Heart right ventricle (tissue), 16 donors: ENCODE measurements at regions of chr5 and their contacts with region 1.

Region 1: DNA sequence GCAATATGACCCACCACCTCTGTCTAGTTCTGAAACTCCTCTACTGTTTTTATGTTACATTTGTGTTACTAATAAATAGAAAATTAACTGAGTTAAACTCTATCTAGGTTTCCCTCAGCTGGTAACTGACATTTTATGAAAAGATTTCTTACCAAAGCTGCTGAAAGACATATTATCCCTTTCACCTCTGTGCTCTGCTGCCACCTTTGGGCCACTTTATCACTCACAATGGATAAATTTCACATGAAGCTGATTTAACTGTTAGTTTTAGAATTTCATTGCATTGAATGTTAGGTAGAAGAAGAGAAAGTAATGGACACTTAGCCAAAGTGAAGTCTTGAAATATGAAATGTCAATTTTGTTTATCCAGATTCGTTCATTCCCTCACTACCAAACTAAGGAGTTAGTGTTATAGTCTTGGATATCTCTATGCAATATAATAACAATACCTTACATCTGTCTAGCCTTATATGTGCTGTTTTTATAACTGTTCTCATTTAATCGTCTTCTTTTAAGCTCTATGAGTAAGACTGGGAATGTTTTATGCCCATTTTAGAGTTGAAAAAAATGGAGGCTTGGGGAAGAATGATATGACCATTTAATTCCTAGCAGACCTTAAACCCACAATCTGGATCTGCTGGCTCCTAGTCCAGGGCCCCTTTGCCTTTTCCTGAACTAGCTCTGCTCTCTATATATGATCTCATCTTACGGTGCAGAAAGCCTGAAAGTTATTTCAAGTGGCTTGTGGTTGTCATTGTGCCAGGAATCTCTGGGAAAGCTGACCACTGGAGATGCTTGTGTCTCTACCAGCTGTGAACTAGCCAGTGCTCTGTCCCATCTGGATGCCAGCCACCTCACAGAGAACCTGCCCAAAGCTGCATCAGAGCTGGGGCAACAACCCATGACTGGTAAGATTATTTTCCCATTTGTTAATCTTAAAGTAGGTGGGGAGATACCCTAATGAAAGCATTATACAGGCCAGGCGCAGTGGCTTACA is 97.1 kb downstream of the GOLPH3 start:
- DNase-seq: peak; percentile 40 to 72
- ATAC-seq: peak; percentile 55 to 92 (median 83)
- H3K4me3 ChIP-seq: no peak overlapping the region
- H3K27ac ChIP-seq: peak overlapping the region in 7 of 10 donors; percentile 5 to 70 (median 49)
- H3K4me1 ChIP-seq: peaks cover 0 to 15% (median 3%) of the 10 kb centered on the region in 9 donors
- H3K27me3 ChIP-seq: no peaks in the 10 kb centered on the region
- CTCF ChIP-seq: peak; percentile 48 to 91 (median 79)

Region 2: DNA sequence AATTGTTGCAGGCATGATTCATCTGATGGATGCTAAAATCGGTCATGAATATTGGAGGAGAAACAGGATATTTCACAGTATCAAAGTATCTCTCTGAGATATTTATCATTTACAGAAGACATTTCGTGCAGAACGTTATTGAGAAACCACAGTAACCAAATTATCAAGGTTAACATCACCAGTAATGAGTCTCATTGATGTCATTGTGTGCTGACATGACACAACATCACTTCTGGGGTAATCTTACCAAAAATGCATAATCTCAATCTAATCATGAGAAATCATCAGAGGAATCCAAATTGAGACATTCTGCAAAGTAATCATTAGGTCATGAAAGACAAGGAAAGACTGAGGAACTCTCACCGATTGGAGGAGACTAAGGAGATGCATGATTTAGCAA is 502.2 kb before region 1 on chr5:
- intact Hi-C with region 1: loop called in 2 of 10 experiments (anchors 5 to 10 kb)
- DNase-seq: no peak
- ATAC-seq: no peak
- H3K4me3 ChIP-seq: no peak overlapping the region
- H3K27ac ChIP-seq: no peak overlapping the region
- H3K4me1 ChIP-seq: no peaks in the 10 kb centered on the region
- H3K27me3 ChIP-seq: no peaks in the 10 kb centered on the region
- CTCF ChIP-seq: no peak

Region 3: DNA sequence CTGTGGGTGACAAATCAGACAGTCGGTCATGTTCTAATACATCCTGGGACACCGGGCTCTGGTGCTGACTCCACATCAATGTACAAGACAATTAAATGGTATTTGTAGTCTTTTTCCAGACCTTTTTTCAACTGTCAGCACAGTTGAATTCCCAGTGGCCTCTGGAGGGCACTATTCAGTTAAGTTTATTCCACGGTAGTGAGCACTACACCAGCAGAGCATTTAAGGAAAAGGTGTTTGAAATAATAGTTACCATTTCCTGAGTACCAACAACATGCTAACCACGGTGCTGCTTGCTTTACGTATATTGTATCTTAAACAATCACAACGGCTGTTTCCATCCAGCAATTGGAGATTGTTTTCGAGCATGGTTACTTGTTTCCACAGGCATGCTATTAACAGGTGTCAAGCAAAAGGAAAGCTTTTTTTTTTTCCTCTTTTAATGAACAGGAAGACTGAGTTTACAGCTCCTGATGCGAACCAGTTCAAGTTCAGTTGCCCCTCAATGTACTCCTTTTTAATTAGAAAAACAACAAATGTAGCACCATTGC is 251.4 kb before region 1 on chr5:
- intact Hi-C with region 1: loop called (anchors 1 to 10 kb)
- DNase-seq: peak in 1 of 2 donors; percentile 61
- ATAC-seq: peak; percentile 69 to 92 (median 82)
- H3K4me3 ChIP-seq: no peak overlapping the region
- H3K27ac ChIP-seq: no peak overlapping the region
- H3K4me1 ChIP-seq: peaks cover 0 to 20% (median 13%) of the 10 kb centered on the region in 9 donors
- H3K27me3 ChIP-seq: no peaks in the 10 kb centered on the region
- CTCF ChIP-seq: peak; percentile 36 to 87 (median 71)

Region 4: GRCh38 chr5:31854181-31855133 is 222.5 kb before region 1 on chr5:
- intact Hi-C with region 1: loop called in 1 of 10 experiments (anchors 10 kb)
- DNase-seq: peak; percentile 60 to 65
- ATAC-seq: peak; percentile 77 to 87 (median 82)
- H3K4me3 ChIP-seq: peak overlapping the region; percentile 42 to 81 (median 65)
- H3K27ac ChIP-seq: peak overlapping the region; percentile 63 to 91 (median 82)
- H3K4me1 ChIP-seq: peaks cover 0 to 72% (median 27%) of the 10 kb centered on the region in 9 donors
- H3K27me3 ChIP-seq: peaks cover 0 to 30% (median 0%) of the 10 kb centered on the region in 7 donors
- CTCF ChIP-seq: no peak

Region 5: DNA sequence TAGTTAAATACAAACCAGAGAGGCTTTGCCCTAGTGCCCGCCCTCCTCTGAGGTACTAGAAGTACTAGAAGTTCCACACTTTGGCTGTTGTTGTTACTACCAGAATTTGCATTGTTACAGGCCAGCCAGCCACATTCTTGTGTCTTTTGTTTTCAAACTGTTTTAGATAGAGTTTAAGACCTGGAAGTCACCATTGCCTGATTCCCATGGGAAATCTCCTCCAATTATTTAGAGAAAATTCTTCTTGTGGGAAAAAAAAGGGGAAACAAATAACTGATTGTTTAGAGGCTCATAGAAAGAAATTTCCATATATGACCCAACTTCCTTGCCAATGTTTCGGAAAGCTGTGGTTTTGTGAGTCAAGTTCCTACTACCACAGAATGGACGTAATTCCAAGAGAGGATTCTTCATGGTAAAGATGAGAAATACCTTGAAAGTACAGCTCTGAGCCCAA is 155.1 kb before region 1 on chr5:
- intact Hi-C with region 1: loop called in 4 of 10 experiments (anchors 10 kb)
- DNase-seq: no peak
- ATAC-seq: peak in 4 of 8 donors; percentile 51 to 76 (median 60)
- H3K4me3 ChIP-seq: no peak overlapping the region
- H3K27ac ChIP-seq: peak overlapping the region in 4 of 10 donors; percentile 20 to 44 (median 30)
- H3K4me1 ChIP-seq: peaks cover 0 to 38% (median 16%) of the 10 kb centered on the region in 9 donors
- H3K27me3 ChIP-seq: no peaks in the 10 kb centered on the region
- CTCF ChIP-seq: no peak

Region 6: DNA sequence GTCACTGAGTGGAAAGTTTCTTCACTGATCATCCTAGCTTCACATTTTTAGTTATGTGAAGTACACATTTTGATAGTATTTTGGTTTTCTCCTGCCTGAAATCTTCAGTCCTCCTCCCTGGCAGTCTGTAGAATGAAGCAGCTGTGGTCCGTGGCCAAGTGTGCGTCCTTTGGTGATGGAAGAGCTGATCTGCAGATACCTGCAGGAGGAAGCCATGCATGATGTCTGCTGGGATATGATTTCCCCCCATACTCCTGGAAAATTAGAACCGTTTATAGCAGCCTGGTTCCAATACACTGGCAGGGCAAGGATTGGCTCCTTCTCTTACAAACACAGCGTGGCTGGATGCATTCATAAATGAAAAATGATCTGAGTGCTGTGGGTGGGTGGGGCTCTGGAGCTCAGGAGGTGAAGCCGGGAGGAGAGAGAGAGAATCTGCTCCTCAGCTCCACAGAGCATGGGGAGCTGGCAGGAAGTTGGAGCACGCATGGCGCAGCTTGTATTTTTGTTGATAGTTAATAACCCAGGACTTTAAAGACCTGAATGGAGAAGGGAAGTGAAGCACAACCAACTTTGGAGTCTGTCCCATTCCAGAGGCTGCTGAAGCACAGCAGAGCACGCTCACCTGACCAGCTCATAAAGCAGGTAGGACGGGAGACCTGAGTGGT is 141.2 kb before region 1 on chr5:
- intact Hi-C with region 1: loop called in 1 of 10 experiments (anchors 10 kb)
- DNase-seq: no peak
- ATAC-seq: peak in 6 of 8 donors; percentile 52 to 61 (median 58)
- H3K4me3 ChIP-seq: no peak overlapping the region
- H3K27ac ChIP-seq: peak overlapping the region in 1 of 10 donors; percentile 12
- H3K4me1 ChIP-seq: peaks cover 0 to 50% (median 17%) of the 10 kb centered on the region in 9 donors
- H3K27me3 ChIP-seq: no peaks in the 10 kb centered on the region
- CTCF ChIP-seq: no peak

Region 7: DNA sequence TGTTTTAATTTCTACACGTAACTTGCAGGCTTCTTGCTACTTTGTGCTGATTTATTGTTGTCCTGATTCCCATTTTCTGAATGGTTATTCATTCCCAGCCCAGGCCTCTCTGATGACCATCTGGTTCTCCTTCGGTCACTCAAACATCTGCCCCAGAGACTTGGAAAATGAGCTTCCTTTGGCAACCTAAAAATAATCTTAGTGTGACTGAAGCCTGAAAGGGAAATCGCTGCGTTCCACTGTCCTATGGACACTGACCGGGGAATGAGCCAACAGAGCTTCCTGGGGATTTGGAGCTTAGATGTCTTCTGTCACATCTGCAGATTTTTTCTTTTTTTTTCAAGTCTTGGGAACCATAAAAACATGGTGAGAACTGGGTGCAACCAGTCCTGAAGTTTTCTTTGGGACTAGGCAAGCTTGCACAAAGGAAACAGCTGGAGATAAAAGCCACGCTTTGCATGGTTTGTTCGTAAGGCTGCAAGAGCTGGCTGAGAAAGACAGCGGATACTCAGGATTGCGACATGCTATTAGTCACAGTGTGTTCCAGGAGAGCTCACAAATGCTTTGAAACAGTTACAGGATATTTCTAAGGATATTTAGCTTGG is 49.2 kb before region 1 on chr5:
- intact Hi-C with region 1: loop called in 1 of 10 experiments (anchors 5 kb)
- DNase-seq: peak in 1 of 2 donors; percentile 82
- ATAC-seq: peak; percentile 88 to 96 (median 93)
- H3K4me3 ChIP-seq: peak overlapping the region in 3 of 10 donors; percentile 11 to 19 (median 16)
- H3K27ac ChIP-seq: peak overlapping the region; percentile 63 to 87 (median 76)
- H3K4me1 ChIP-seq: peaks cover 2 to 73% (median 65%) of the 10 kb centered on the region in 9 donors
- H3K27me3 ChIP-seq: no peaks in the 10 kb centered on the region
- CTCF ChIP-seq: no peak